Aorta (tissue), 5 donors: ENCODE measurements at regions of chr20 and their contacts with region 1.

Region 1: GRCh38 chr20:16821211-16822089 is 73.3 kb downstream of the OTOR start:
- DNase-seq: no peak
- ATAC-seq: peak; percentile 33
- H3K4me3 ChIP-seq: no peak overlapping the region
- H3K27ac ChIP-seq: no peak overlapping the region
- H3K4me1 ChIP-seq: no peaks in the 10 kb centered on the region
- H3K27me3 ChIP-seq: no peaks in the 10 kb centered on the region

Region 2: GRCh38 chr20:16865406-16865805 is 44.0 kb after region 1 on chr20:
- intact Hi-C with region 1: loop called in 1 of 2 experiments (anchors 2 kb)
- DNase-seq: no peak
- ATAC-seq: no peak
- H3K4me3 ChIP-seq: no peak overlapping the region
- H3K27ac ChIP-seq: no peak overlapping the region
- H3K4me1 ChIP-seq: no peaks in the 10 kb centered on the region
- H3K27me3 ChIP-seq: no peaks in the 10 kb centered on the region